ENCODE measurements at regions of chr5 and their contacts with region 1.

Region 1: DNA sequence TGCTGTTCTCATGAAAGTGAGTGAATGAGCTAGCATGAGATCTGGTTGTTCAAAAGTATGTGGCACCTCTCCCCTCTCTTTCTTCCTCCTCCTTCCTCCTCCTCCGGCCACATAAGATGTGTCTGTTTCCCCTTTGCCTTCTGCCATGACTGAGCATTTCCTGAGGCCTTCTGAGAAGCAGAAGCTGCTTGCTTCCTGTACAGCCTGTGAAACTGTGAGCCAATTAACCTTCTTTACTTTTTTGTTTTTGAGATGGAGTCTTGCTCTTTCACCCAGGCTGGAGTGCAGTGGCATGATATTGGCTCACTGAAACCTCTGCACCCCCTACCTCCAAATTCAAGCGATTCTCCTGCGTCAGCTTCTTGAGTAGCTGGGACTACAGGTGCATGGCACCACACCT is 6.1 kb downstream of the S100Z start:
- DNase-seq: peak; percentile 71
- ATAC-seq: peak; percentile 93
- H3K4me3 Mint-ChIP-seq: peak overlapping the region; percentile 13
- H3K27ac Mint-ChIP-seq: peak overlapping the region; percentile 88
- H3K4me1 Mint-ChIP-seq: peaks cover 40% of the 10 kb centered on the region
- H3K27me3 Mint-ChIP-seq: no peaks in the 10 kb centered on the region

Region 2: GRCh38 chr5:76841361-76841760 is 14.6 kb before region 1 on chr5:
- CTCF ChIA-PET with region 1: no interaction called
- DNase-seq: no peak
- ATAC-seq: no peak
- H3K4me3 Mint-ChIP-seq: no peak overlapping the region
- H3K27ac Mint-ChIP-seq: no peak overlapping the region
- H3K4me1 Mint-ChIP-seq: no peaks in the 10 kb centered on the region
- H3K27me3 Mint-ChIP-seq: peaks cover 14% of the 10 kb centered on the region

Region 3: GRCh38 chr5:76867827-76868693 is 12.1 kb after region 1 on chr5:
- CTCF ChIA-PET with region 1: interaction called, 20 read pairs
- DNase-seq: peak; percentile 76
- ATAC-seq: peak; percentile 73
- H3K4me3 Mint-ChIP-seq: no peak overlapping the region
- H3K27ac Mint-ChIP-seq: no peak overlapping the region
- H3K4me1 Mint-ChIP-seq: peaks cover 4% of the 10 kb centered on the region
- H3K27me3 Mint-ChIP-seq: no peaks in the 10 kb centered on the region